Mammary epithelial cell (primary cell): ENCODE measurements at regions of chr11 and their contacts with region 1.

Region 1: DNA sequence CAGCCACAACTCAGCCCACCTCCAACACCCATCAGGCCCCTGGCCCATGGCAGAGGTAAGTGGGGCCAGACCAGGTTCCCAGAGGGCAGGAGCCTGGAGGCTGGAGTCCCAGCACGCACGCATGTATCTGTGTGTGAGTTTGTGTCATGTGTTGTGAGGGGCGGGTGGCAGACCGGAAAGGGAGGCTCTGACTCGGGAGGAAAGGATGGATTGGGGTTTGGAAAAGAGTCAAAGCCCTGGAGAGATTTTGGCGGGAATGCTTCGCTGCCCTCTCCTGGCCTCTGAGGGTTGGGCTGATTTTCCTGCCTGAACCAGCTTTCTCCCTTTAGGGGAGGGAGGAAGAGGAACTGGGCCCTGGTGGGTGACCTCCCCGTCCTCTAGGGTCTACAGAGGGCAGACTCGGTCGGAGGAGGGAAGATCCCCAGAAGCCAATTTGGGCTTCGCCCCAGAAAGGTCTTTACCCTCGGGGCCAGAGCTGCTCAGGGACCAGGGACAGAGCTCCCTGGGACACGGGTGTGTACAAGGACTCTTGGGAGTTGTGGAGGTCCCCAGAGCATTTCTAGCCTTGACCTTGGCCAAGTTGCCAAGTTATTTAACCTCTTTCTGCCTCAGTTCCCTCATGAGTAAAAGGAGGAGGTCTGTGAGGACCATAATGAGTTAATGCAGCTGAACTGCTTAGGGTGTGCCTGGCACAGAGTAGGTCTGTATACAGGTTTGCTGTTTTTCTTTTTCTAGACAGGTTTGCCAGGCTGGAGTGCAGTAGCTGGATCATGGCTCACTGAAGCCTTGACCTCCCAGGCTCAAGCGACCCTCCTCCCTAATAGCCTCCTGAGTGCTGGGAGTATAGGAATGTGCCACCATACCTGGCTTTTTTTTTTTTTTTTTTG is 6.9 kb downstream of the C11orf68 start:
- DNase-seq: peak; percentile 89
- H3K4me3 ChIP-seq: no peak overlapping the region
- H3K27ac ChIP-seq: peak overlapping the region; percentile 98
- H3K4me1 ChIP-seq: peaks cover 65% of the 10 kb centered on the region
- H3K27me3 ChIP-seq: no peaks in the 10 kb centered on the region
- CTCF ChIP-seq: peak; percentile 21 to 38

Region 2: GRCh38 chr11:65888163-65888814 is 23.6 kb before region 1 on chr11 and contains the start of gene FIBP:
- CTCF ChIA-PET with region 1: interaction called, 9 read pairs
- dilution Hi-C with region 1: no loop called
- in situ Hi-C with region 1: no loop called
- intact Hi-C with region 1: loop called (anchors 1 kb)
- DNase-seq: peak; percentile 95
- H3K4me3 ChIP-seq: peak within 1 kb of the TSS; percentile 78 to 89 (median 80)
- H3K27ac ChIP-seq: peak within 1 kb of the TSS; percentile 70
- H3K4me1 ChIP-seq: peaks cover 56% of the 10 kb centered on the region
- H3K27me3 ChIP-seq: no peaks in the 10 kb centered on the region
- CTCF ChIP-seq: peak; percentile 30 to 80
- total RNA-seq, gene FIBP: 84.1 to 125 TPM

Region 3: GRCh38 chr11:65900125-65900898 is 11.6 kb before region 1 on chr11 and contains the start of gene FOSL1:
- CTCF ChIA-PET with region 1: no interaction called
- dilution Hi-C with region 1: no loop called
- in situ Hi-C with region 1: no loop called
- intact Hi-C with region 1: loop called (anchors 1 kb)
- DNase-seq: peak; percentile 99
- H3K4me3 ChIP-seq: peak within 1 kb of the TSS; percentile 68 to 88 (median 83)
- H3K27ac ChIP-seq: peak within 1 kb of the TSS; percentile 86
- H3K4me1 ChIP-seq: peaks cover 58% of the 10 kb centered on the region
- H3K27me3 ChIP-seq: no peaks in the 10 kb centered on the region
- CTCF ChIP-seq: no peak
- total RNA-seq, gene FOSL1: 12.5 to 275 TPM